Psoas muscle (tissue), 8 donors: ENCODE measurements at regions of chr21 and their contacts with region 1.

Region 1: DNA sequence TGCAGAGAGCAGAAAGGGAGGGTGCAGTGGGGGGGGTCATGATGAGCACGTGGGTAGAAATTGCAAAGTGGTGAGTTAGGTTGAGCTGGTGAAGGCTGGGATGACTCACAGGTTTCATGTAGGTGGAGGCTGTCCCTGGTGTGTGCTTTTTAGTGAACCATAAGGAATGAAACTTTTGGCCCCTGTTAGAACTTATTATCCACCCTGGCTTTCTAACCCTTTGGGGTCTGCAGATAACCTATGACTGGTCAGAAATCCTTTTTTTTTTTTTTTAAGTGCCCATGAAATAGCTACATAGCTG is 46.9 kb downstream of the DOP1B start:
- DNase-seq: no peak
- ATAC-seq: peak; percentile 71 to 81 (median 75)
- H3K4me3 ChIP-seq: no peak overlapping the region
- H3K27ac ChIP-seq: peak overlapping the region; percentile 80
- H3K4me1 ChIP-seq: peaks cover 33% of the 10 kb centered on the region
- H3K27me3 ChIP-seq: no peaks in the 10 kb centered on the region
- CTCF ChIP-seq: no peak

Region 2: DNA sequence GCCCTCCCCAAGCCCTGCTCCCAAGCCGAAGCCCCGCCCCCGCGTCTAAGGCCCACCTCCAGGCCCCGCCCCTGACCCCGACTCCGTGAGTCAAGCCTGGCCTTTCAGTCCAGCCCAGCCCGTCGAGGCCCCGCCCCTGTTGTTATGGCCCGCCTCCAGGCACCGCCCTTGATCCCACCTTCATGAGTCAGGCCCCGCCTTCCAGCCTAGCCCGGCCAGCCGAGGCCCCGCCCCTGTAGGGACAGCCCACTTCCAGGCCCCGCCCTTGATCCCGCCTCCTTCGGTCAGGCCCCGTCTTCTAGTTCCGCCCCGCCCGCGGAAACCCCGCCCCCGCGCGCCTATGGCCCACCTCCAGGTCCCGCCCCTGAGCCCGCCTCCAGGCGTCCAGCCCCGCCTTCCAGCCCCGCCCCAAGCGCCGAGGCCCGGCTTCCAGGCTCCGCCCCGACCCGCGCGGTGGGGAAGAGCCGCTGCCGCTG is 47.2 kb before region 1 on chr21:
- intact Hi-C with region 1: loop called (anchors 5 kb)
- DNase-seq: peak; percentile 99 to 100
- ATAC-seq: peak; percentile 92 to 96 (median 94)
- H3K4me3 ChIP-seq: peak overlapping the region; percentile 92
- H3K27ac ChIP-seq: peak overlapping the region; percentile 79
- H3K4me1 ChIP-seq: peaks cover 15% of the 10 kb centered on the region
- H3K27me3 ChIP-seq: no peaks in the 10 kb centered on the region
- CTCF ChIP-seq: no peak